ENCODE measurements at regions of chr9 and their contacts with region 1.

Region 1: GRCh38 chr9:131739980-131740648 is at the start of gene RAPGEF1:
- DNase-seq: no peak
- ATAC-seq: peak; percentile 83
- H3K4me3 ChIP-seq: peak within 1 kb of the TSS; percentile 66 to 74
- H3K27ac ChIP-seq: peak within 1 kb of the TSS; percentile 85
- H3K4me1 ChIP-seq: peaks cover 31% of the 10 kb centered on the region
- H3K27me3 ChIP-seq: no peaks in the 10 kb centered on the region
- CTCF ChIP-seq: peak; percentile 95
- total RNA-seq, gene RAPGEF1: 86.8 TPM

Region 2: GRCh38 chr9:131289301-131290038 is 450.6 kb before region 1 on chr9 and contains the start of gene PLPP7:
- CTCF ChIA-PET with region 1: no interaction called
- POLR2A ChIA-PET with region 1: no interaction called
- in situ Hi-C with region 1: no loop called
- intact Hi-C with region 1: no loop called
- DNase-seq: no peak
- ATAC-seq: peak; percentile 94
- H3K4me3 ChIP-seq: peak within 1 kb of the TSS; percentile 43 to 54
- H3K27ac ChIP-seq: peak within 1 kb of the TSS; percentile 70
- H3K4me1 ChIP-seq: no peaks in the 10 kb centered on the region; the same call in 1 of the 2 replicates
- H3K27me3 ChIP-seq: no peaks in the 10 kb centered on the region
- CTCF ChIP-seq: no peak
- total RNA-seq, gene PLPP7: 3.3 TPM

Region 3: GRCh38 chr9:131590908-131591844 is 148.9 kb before region 1 on chr9:
- CTCF ChIA-PET with region 1: no interaction called
- POLR2A ChIA-PET with region 1: no interaction called
- in situ Hi-C with region 1: no loop called
- intact Hi-C with region 1: loop called (anchors 5 kb)
- DNase-seq: peak; percentile 38
- ATAC-seq: peak; percentile 94
- H3K4me3 ChIP-seq: no peak overlapping the region
- H3K27ac ChIP-seq: no peak overlapping the region
- H3K4me1 ChIP-seq: no peaks in the 10 kb centered on the region; the same call in 1 of the 2 replicates
- H3K27me3 ChIP-seq: no peaks in the 10 kb centered on the region
- CTCF ChIP-seq: peak; percentile 88

Region 4: GRCh38 chr9:131678499-131679111 is 61.5 kb before region 1 on chr9:
- CTCF ChIA-PET with region 1: no interaction called
- POLR2A ChIA-PET with region 1: no interaction called
- in situ Hi-C with region 1: no loop called
- intact Hi-C with region 1: loop called (anchors 10 kb)
- DNase-seq: peak; percentile 83
- ATAC-seq: peak; percentile 98
- H3K4me3 ChIP-seq: peak overlapping the region in 1 of 2 experiments; percentile 30; a peak in 2 of 4 replicates
- H3K27ac ChIP-seq: peak overlapping the region; percentile 95
- H3K4me1 ChIP-seq: peaks cover 55% of the 10 kb centered on the region
- H3K27me3 ChIP-seq: no peaks in the 10 kb centered on the region
- CTCF ChIP-seq: no peak

Region 5: DNA sequence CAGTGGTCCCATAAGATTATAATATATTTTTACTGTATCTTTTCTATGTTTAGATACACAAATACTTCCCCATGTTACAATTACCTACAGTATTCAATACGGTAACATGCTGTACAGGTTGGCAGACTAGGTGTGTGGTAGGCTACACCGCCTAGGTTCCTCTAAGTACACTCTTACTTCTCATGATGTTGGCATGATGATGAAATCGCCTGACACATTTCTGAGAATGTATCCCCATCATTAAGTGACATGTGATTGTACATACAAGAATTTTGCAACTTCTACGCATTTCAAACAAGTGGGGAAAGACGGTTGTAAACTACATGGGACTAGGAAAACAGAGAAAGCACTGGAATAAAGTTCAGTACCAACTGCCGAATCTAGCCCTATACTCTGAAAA is 561.4 kb after region 1 on chr9:
- CTCF ChIA-PET with region 1: interaction called, 12 read pairs
- POLR2A ChIA-PET with region 1: no interaction called
- in situ Hi-C with region 1: no loop called
- intact Hi-C with region 1: no loop called
- DNase-seq: no peak
- ATAC-seq: no peak
- H3K4me3 ChIP-seq: no peak overlapping the region
- H3K27ac ChIP-seq: no peak overlapping the region
- H3K4me1 ChIP-seq: no peaks in the 10 kb centered on the region
- H3K27me3 ChIP-seq: no peaks in the 10 kb centered on the region
- CTCF ChIP-seq: no peak